ENCODE measurements at regions of chr19 and their contacts with region 1.

Region 1: DNA sequence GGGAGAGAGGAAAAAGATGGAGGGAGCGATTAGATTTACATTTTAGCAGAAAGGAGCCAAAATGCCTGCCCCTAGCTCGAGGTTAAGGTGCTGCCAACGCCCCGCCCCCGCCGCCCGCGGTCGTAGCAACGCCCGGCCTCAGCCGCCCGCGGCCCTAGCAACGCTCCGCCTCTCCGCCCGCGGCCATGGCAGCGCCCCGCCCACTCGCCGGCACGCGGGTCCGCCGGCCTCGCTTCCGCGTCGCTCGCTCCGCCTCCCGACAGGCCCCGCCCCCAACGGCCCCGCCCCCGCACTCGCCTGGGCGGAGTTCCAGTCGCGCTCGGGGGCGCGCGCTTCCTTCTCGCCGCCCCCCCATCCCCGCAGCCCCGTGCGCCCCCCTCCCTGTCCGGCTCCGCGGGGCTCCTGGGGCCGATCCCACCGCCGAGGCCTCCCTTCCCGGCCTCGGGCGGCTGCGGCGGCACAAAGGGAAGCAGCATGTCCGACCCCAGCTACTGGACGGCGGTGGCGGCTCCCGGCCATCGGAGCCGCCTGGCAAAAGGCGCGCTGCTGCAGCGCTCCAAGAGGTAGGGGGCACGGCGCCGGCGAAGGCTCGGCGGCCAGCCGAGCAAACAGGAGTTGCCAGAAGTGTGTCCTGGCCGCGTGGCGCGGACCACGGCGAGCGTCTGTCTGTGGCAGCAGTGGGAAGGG is 20.3 kb downstream of the MAST3 start:
- DNase-seq: peak; percentile 92 to 97 (median 96)
- H3K4me3 ChIP-seq: peak overlapping the region; percentile 63 to 64
- H3K4me3 Mint-ChIP-seq: peak overlapping the region; percentile 88 to 98 (median 95)
- H3K27ac ChIP-seq: peak overlapping the region; percentile 85
- H3K27ac Mint-ChIP-seq: peak overlapping the region; percentile 89 to 99 (median 96)
- H3K4me1 ChIP-seq: peaks cover 44% of the 10 kb centered on the region
- H3K4me1 Mint-ChIP-seq: peaks cover 18 to 45% (median 31%) of the 10 kb centered on the region in 4 donors
- H3K27me3 ChIP-seq: no peaks in the 10 kb centered on the region
- H3K27me3 Mint-ChIP-seq: no peaks in the 10 kb centered on the region

Region 2: DNA sequence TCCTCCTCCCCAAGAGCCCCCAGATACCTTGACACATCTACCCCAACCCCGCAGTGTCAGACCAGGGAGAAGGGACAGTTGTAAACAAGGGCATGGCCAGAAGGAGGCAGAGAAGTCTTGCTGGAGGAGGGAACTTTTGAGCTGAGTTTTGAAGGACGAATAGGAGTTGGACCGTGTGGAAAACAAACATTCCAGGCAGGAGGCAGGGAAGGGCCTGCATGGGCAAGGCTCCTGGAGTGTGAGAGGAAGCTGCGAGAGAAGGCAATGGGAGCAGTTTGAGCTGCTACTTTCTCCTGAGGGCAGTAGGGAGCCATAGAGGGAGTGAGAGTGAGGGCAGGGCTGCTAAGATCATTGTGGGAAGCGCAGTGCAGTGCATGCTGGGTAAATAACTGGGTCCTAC is 54.4 kb before region 1 on chr19:
- CTCF ChIA-PET with region 1: interaction called, 7 read pairs
- POLR2A ChIA-PET with region 1: interaction called, 3 read pairs
- intact Hi-C with region 1: loop called (anchors 10 kb)
- DNase-seq: peak in 3 of 5 donors; percentile 24 to 32 (median 24)
- H3K4me3 ChIP-seq: no peak overlapping the region
- H3K4me3 Mint-ChIP-seq: peak overlapping the region in 1 of 8 donors; percentile 59
- H3K27ac ChIP-seq: no peak overlapping the region
- H3K27ac Mint-ChIP-seq: peak overlapping the region in 4 of 7 donors; percentile 16 to 76 (median 43)
- H3K4me1 ChIP-seq: peaks cover 3% of the 10 kb centered on the region
- H3K4me1 Mint-ChIP-seq: peaks cover 2 to 6% (median 3%) of the 10 kb centered on the region in 4 donors
- H3K27me3 ChIP-seq: no peaks in the 10 kb centered on the region
- H3K27me3 Mint-ChIP-seq: no peaks in the 10 kb centered on the region

Region 3: DNA sequence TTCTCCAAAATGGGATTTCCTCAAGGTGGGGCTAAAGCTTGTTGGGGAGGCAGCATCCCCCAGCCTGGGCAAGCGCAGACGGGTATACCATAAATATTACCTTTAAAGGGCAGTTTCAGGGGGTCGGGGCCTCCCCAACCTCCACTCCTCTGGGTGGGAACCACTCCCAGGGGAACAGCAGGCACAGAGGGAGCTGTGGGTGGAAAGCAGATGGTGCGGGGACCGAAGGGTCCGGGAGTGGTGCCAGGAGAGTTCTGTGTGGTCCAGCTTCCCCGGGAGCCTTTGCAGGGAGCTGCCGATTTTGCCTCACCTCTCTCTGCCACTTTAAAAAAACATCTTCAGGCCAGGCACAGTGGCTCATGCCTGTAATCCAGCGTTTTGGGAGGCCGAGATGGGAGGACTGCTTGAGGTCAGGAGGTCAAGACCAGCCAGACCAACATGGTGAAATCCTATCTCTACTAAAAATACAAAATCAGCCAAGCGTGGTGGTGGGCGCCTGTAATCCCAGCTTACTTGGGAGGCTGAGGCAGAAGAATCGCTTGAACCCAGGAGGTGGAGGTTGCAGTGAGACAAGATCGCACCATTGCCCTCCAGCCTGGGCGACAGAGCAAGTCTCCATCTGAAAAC is 14.8 kb before region 1 on chr19:
- CTCF ChIA-PET with region 1: interaction called, 28 read pairs
- POLR2A ChIA-PET with region 1: interaction called, 32 read pairs
- intact Hi-C with region 1: loop called (anchors 2 kb)
- DNase-seq: no peak
- H3K4me3 ChIP-seq: no peak overlapping the region
- H3K4me3 Mint-ChIP-seq: peak overlapping the region in 3 of 8 donors; percentile 10 to 69 (median 69)
- H3K27ac ChIP-seq: no peak overlapping the region
- H3K27ac Mint-ChIP-seq: peak overlapping the region in 1 of 7 donors; percentile 60
- H3K4me1 ChIP-seq: peaks cover 33% of the 10 kb centered on the region
- H3K4me1 Mint-ChIP-seq: peaks cover 17 to 32% (median 28%) of the 10 kb centered on the region in 4 donors
- H3K27me3 ChIP-seq: no peaks in the 10 kb centered on the region
- H3K27me3 Mint-ChIP-seq: no peaks in the 10 kb centered on the region

Region 4: DNA sequence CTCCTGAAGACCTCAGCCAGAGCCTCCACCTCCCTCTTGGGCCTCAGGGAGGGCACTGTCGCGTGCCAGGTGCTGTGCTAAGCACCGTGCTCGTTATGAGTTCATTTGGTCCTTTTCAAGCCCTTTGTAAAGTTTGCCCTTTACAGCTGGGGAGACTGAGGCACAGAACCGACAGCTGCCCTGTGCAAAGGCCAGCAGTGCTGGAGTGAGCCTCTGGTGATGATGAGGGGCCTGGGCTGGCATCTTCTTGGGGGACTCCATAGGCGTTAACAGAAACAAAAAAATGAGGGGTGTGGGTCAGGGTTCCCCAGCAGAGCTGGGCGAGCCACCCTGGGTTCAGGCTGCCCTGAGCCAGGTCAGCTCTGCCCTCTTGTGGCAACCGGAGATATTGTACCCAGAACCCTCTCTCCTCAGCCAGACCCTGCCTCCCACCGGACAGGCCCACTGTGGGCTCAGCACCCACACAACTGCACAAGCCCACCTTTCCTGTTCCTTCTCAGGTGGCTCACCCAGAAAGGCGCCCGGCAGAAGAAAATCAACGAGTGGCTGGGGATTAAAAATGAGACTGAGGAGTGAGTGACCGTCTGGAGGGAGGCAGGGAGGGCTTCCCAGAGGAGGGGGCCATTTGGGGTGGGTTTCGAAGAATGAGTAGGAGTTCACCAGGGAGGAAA is 50.3 kb after region 1 on chr19:
- CTCF ChIA-PET with region 1: interaction called, 125 read pairs
- POLR2A ChIA-PET with region 1: interaction called, 5 read pairs
- intact Hi-C with region 1: loop called (anchors 1 kb)
- DNase-seq: peak in 4 of 5 donors; percentile 56 to 62 (median 56)
- H3K4me3 ChIP-seq: no peak overlapping the region
- H3K4me3 Mint-ChIP-seq: no peak overlapping the region
- H3K27ac ChIP-seq: no peak overlapping the region
- H3K27ac Mint-ChIP-seq: peak overlapping the region in 6 of 7 donors; percentile 4 to 70 (median 34)
- H3K4me1 ChIP-seq: peaks cover under 1% of the 10 kb centered on the region
- H3K4me1 Mint-ChIP-seq: peaks cover 2 to 8% (median 4%) of the 10 kb centered on the region in 4 donors
- H3K27me3 ChIP-seq: no peaks in the 10 kb centered on the region
- H3K27me3 Mint-ChIP-seq: no peaks in the 10 kb centered on the region

Region 5: DNA sequence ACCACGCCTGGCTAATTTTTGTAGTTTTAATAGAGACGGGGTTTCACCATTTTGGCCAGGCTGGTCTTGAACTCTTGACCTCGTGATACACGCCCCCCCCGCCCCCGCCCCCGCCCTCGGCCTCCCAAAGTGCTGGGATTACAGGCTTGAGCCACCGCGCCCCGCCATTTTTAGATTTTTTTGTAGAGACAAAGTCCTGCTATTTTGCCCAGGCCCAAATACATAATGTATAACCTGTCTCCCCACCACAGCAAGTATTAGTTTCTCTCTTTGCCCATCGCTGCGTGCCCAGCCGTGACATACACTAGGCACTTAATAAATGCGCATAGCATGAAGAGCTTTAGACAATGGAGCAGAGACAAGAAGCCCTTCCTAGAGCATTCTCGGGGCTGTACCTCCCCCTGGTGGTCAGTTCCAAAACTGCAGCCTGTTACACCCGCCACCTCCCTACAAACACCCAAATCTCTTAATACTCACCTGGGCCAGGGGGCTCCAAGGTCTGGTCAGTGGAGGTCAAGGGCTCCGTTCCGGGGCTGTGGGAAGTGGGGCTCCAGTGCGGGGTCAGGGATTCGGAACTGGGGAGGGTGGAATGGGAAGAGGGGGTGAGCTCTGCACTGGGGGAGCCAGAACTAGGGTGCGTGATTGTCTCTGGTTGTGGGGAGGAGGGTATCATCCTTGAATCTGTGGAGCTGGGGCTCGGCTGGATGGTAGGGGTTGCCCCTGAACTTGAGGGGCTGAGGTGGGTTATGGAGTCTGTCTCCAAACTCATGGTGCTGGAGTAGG is 133.9 kb after region 1 on chr19:
- CTCF ChIA-PET with region 1: interaction called, 35 read pairs
- POLR2A ChIA-PET with region 1: no interaction called
- intact Hi-C with region 1: loop called (anchors 2 kb)
- DNase-seq: peak; percentile 74 to 79 (median 76)
- H3K4me3 ChIP-seq: no peak overlapping the region
- H3K4me3 Mint-ChIP-seq: no peak overlapping the region
- H3K27ac ChIP-seq: no peak overlapping the region
- H3K27ac Mint-ChIP-seq: peak overlapping the region in 2 of 7 donors; percentile 4 to 66
- H3K4me1 ChIP-seq: no peaks in the 10 kb centered on the region
- H3K4me1 Mint-ChIP-seq: peaks cover 1 to 7% (median 5%) of the 10 kb centered on the region in 4 donors
- H3K27me3 ChIP-seq: no peaks in the 10 kb centered on the region
- H3K27me3 Mint-ChIP-seq: peaks cover 4 to 9% of the 10 kb centered on the region in 2 donors

Region 6: GRCh38 chr19:18294108-18294851 is 176.4 kb after region 1 on chr19:
- CTCF ChIA-PET with region 1: no interaction called
- POLR2A ChIA-PET with region 1: no interaction called
- intact Hi-C with region 1: no loop called
- DNase-seq: peak; percentile 89 to 97 (median 92)
- H3K4me3 ChIP-seq: no peak overlapping the region
- H3K4me3 Mint-ChIP-seq: peak overlapping the region in 7 of 8 donors; percentile 60 to 95 (median 72)
- H3K27ac ChIP-seq: peak overlapping the region; percentile 98
- H3K27ac Mint-ChIP-seq: peak overlapping the region; percentile 79 to 100 (median 100)
- H3K4me1 ChIP-seq: peaks cover 60% of the 10 kb centered on the region
- H3K4me1 Mint-ChIP-seq: peaks cover 32 to 73% (median 44%) of the 10 kb centered on the region in 4 donors
- H3K27me3 ChIP-seq: no peaks in the 10 kb centered on the region
- H3K27me3 Mint-ChIP-seq: no peaks in the 10 kb centered on the region

Measured in CD4-positive, alpha-beta memory T cell (primary cell).